HAP-1 (cell line): ENCODE measurements at regions of chr9 and their contacts with region 1.

Region 1: DNA sequence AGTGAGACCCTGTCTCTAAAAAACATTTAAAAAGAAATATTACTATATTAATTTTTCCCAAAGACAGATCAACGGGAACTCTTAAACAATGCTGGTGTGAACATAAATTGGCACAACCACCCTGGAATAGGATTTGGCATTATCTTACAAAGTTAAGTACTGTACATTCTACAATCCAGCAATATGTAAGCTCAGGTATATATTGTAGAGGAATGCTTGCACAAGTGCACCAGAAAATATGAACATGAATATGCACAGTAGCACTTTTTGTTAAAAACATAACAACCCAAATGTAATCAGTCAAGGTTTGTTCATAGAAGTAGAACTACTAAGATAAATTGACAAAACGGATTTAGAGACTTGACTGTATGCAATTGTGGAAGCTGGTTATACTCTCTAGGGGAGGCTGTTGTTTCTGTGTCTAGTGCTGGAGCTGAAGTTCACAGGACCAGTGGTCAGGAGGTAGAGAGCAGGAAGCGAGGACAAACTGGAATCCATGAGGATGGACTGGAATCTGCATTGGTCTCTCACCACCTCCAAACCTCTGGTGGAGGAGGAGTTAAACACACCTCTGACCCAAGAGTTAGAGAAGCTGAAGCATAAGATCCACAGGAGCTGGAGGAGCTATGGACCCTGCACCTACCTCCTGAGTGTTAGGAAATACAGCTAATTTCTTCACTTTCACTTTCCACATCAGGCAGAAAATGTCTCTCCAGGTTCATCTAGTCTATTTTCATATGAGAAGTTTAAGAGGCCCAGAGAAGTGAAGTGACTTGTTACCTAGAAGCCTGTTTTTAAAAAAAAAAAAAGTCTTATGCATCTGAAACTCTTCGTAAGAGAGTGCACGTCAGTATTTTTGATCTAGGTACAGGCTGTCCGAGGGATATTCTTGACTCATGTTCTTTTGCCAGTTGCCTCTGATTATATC is 20.3 kb upstream of the RIC1 start:
- DNase-seq: no peak
- H3K4me3 ChIP-seq: no peak overlapping the region
- H3K4me1 ChIP-seq: no peaks in the 10 kb centered on the region
- H3K27me3 ChIP-seq: no peaks in the 10 kb centered on the region

Region 2: GRCh38 chr9:5186416-5187169 is 422.0 kb before region 1 on chr9:
- in situ Hi-C with region 1: loop called (anchors 5 kb)
- DNase-seq: peak; percentile 55 to 65
- H3K4me3 ChIP-seq: no peak overlapping the region
- H3K4me1 ChIP-seq: no peaks in the 10 kb centered on the region
- H3K27me3 ChIP-seq: no peaks in the 10 kb centered on the region

Region 3: DNA sequence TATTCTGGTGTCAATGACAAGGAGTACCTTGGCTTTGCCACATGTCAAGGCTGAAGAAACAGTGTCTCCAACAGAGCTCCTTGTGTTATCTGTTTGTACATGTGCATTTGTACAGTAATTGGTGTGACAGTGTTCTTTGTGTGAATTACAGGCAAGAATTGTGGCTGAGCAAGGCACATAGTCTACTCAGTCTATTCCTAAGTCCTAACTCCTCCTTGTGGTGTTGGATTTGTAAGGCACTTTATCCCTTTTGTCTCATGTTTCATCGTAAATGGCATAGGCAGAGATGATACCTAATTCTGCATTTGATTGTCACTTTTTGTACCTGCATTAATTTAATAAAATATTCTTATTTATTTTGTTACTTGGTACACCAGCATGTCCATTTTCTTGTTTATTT is 138.4 kb before region 1 on chr9:
- in situ Hi-C with region 1: no loop called
- DNase-seq: no peak
- H3K4me3 ChIP-seq: no peak overlapping the region
- H3K4me1 ChIP-seq: no peaks in the 10 kb centered on the region
- H3K27me3 ChIP-seq: no peaks in the 10 kb centered on the region

Region 4: GRCh38 chr9:5832543-5833529 is 224.3 kb after region 1 on chr9 and contains the start of gene ERMP1:
- in situ Hi-C with region 1: no loop called
- DNase-seq: peak; percentile 78 to 92
- H3K4me3 ChIP-seq: peak within 1 kb of the TSS; percentile 60
- H3K4me1 ChIP-seq: peaks cover 9% of the 10 kb centered on the region; the same call in 1 of the 2 replicates
- H3K27me3 ChIP-seq: no peaks in the 10 kb centered on the region